CD14-positive monocyte (primary cell): ENCODE measurements at regions of chr2 and their contacts with region 1.

Region 1: GRCh38 chr2:38581193-38582147 is 21.3 kb downstream of the HNRNPLL start:
- DNase-seq: peak; percentile 53 to 77 (median 64)
- H3K4me3 ChIP-seq: no peak overlapping the region
- H3K4me3 Mint-ChIP-seq: no peak overlapping the region
- H3K27ac ChIP-seq: no peak overlapping the region
- H3K27ac Mint-ChIP-seq: no peak overlapping the region
- H3K4me1 ChIP-seq: no peaks in the 10 kb centered on the region
- H3K4me1 Mint-ChIP-seq: no peaks in the 10 kb centered on the region
- H3K27me3 ChIP-seq: no peaks in the 10 kb centered on the region
- H3K27me3 Mint-ChIP-seq: no peaks in the 10 kb centered on the region
- CTCF ChIP-seq: peak; percentile 82

Region 2: GRCh38 chr2:38560092-38560491 is 21.4 kb before region 1 on chr2:
- intact Hi-C with region 1: no loop called
- DNase-seq: no peak
- H3K4me3 ChIP-seq: no peak overlapping the region
- H3K4me3 Mint-ChIP-seq: no peak overlapping the region
- H3K27ac ChIP-seq: no peak overlapping the region
- H3K27ac Mint-ChIP-seq: no peak overlapping the region
- H3K4me1 ChIP-seq: peaks cover 16 to 30% of the 10 kb centered on the region in 2 donors
- H3K4me1 Mint-ChIP-seq: peaks cover 21% of the 10 kb centered on the region
- H3K27me3 ChIP-seq: no peaks in the 10 kb centered on the region
- H3K27me3 Mint-ChIP-seq: peaks cover 0 to 3% (median 0%) of the 10 kb centered on the region in 3 donors
- CTCF ChIP-seq: no peak

Region 3: GRCh38 chr2:38728694-38729093 is 147.2 kb after region 1 on chr2:
- intact Hi-C with region 1: loop called (anchors 5 kb)
- DNase-seq: no peak
- H3K4me3 ChIP-seq: no peak overlapping the region
- H3K4me3 Mint-ChIP-seq: no peak overlapping the region
- H3K27ac ChIP-seq: no peak overlapping the region
- H3K27ac Mint-ChIP-seq: no peak overlapping the region
- H3K4me1 ChIP-seq: peaks cover 9 to 10% of the 10 kb centered on the region in 2 donors
- H3K4me1 Mint-ChIP-seq: peaks cover 8% of the 10 kb centered on the region
- H3K27me3 ChIP-seq: no peaks in the 10 kb centered on the region
- H3K27me3 Mint-ChIP-seq: peaks cover 0 to 2% (median 2%) of the 10 kb centered on the region in 3 donors
- CTCF ChIP-seq: no peak